Mammary epithelial cell (primary cell): ENCODE measurements at regions of chr6 and their contacts with region 1.

Region 1: GRCh38 chr6:99165838-99166237 is 183.6 kb downstream of the FAXC start:
- DNase-seq: no peak
- H3K4me3 ChIP-seq: no peak overlapping the region
- H3K27ac ChIP-seq: no peak overlapping the region
- H3K4me1 ChIP-seq: no peaks in the 10 kb centered on the region
- H3K27me3 ChIP-seq: peaks cover 5% of the 10 kb centered on the region
- CTCF ChIP-seq: no peak

Region 2: DNA sequence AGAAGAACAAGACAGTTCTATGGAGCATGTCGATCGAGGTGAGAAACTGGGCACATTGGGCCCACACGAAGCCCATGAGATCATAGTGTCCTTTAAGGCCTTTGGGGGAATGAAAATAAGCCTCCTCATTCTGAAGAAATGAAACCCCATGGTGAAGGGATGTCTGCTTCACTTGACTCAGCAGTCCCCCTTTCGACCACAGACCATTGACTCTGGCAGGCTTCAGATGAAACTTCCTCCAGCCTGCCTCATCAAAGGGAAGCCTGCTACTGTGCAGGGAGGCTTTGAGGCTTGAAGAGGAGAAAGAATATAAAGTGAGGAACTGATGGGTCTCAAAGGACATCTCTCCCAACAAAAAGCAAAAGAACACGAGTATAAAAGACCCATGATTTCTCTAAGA is 73.8 kb before region 1 on chr6:
- CTCF ChIA-PET with region 1: no interaction called
- dilution Hi-C with region 1: loop called (anchors 5 kb)
- in situ Hi-C with region 1: no loop called
- intact Hi-C with region 1: no loop called
- DNase-seq: no peak
- H3K4me3 ChIP-seq: no peak overlapping the region
- H3K27ac ChIP-seq: no peak overlapping the region
- H3K4me1 ChIP-seq: no peaks in the 10 kb centered on the region
- H3K27me3 ChIP-seq: peaks cover 16% of the 10 kb centered on the region
- CTCF ChIP-seq: no peak

Region 3: DNA sequence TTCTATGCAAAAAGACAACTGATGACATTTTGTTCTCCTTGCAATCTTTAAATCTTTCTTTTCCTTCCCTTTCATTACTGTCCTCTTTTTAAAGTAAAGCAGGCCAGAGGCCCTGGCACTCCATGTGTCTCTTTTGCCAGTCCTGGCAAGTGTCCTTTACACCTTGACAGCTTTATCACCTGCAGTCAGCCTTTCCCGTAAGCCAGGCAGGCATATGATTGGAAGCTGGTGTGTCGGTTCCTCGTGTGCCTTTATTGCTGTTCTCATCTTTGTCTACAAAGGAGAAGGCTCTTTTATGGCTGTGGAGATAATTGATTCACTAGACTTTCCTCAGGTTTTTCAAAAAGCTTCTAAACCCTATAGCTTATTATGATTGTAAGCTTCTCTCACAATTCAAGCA is 55.8 kb before region 1 on chr6:
- CTCF ChIA-PET with region 1: no interaction called
- dilution Hi-C with region 1: no loop called
- in situ Hi-C with region 1: no loop called
- intact Hi-C with region 1: no loop called
- DNase-seq: no peak
- H3K4me3 ChIP-seq: no peak overlapping the region
- H3K27ac ChIP-seq: no peak overlapping the region
- H3K4me1 ChIP-seq: no peaks in the 10 kb centered on the region
- H3K27me3 ChIP-seq: peaks cover 8% of the 10 kb centered on the region
- CTCF ChIP-seq: no peak

Region 4: DNA sequence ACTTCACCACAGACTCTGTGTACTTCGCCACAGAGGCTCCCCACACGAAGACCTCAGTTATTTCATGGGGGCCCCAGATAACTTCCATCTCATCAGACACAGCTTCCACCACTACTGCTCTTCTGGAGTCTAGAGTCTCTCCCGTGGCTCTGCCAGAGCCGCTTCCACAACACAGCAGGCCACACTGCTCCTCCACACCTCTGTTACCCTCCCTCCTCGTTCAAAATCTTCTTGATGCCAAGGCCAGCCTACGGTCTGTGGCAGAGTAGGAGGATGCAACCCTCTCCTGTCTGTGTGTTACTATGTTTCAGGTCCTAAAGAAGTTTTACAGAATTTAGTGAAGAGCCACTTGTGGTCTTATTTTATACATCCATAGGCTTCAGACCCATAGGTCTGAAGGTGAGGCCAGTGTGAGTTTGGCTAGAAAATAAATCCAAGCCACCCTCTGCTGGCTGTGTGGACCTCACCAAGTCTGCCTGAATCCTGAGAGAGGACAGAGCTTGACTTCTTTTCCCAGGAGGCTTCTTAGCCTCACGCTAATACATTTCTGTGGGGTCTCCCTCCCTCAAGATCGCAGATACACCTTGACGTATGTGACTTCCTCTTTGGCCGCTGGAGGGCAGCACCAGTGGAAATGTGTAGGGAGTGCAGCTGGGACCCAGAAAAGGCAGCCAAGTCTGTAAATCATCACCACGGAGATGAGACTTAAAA is 14.0 kb before region 1 on chr6:
- CTCF ChIA-PET with region 1: interaction called, 11 read pairs
- dilution Hi-C with region 1: no loop called
- in situ Hi-C with region 1: no loop called
- intact Hi-C with region 1: no loop called
- DNase-seq: peak; percentile 38
- H3K4me3 ChIP-seq: no peak overlapping the region
- H3K27ac ChIP-seq: no peak overlapping the region
- H3K4me1 ChIP-seq: no peaks in the 10 kb centered on the region
- H3K27me3 ChIP-seq: peaks cover 3% of the 10 kb centered on the region
- CTCF ChIP-seq: peak; percentile 74 to 81

Region 5: GRCh38 chr6:99232056-99232455 is 66.2 kb after region 1 on chr6:
- CTCF ChIA-PET with region 1: no interaction called
- dilution Hi-C with region 1: no loop called
- in situ Hi-C with region 1: loop called in 1 of 2 experiments (anchors 5 kb)
- intact Hi-C with region 1: no loop called
- DNase-seq: peak; percentile 8
- H3K4me3 ChIP-seq: no peak overlapping the region
- H3K27ac ChIP-seq: no peak overlapping the region
- H3K4me1 ChIP-seq: no peaks in the 10 kb centered on the region
- H3K27me3 ChIP-seq: peaks cover 8% of the 10 kb centered on the region
- CTCF ChIP-seq: no peak